MCF 10A (cell line): ENCODE measurements at regions of chr2 and their contacts with region 1.

Region 1: DNA sequence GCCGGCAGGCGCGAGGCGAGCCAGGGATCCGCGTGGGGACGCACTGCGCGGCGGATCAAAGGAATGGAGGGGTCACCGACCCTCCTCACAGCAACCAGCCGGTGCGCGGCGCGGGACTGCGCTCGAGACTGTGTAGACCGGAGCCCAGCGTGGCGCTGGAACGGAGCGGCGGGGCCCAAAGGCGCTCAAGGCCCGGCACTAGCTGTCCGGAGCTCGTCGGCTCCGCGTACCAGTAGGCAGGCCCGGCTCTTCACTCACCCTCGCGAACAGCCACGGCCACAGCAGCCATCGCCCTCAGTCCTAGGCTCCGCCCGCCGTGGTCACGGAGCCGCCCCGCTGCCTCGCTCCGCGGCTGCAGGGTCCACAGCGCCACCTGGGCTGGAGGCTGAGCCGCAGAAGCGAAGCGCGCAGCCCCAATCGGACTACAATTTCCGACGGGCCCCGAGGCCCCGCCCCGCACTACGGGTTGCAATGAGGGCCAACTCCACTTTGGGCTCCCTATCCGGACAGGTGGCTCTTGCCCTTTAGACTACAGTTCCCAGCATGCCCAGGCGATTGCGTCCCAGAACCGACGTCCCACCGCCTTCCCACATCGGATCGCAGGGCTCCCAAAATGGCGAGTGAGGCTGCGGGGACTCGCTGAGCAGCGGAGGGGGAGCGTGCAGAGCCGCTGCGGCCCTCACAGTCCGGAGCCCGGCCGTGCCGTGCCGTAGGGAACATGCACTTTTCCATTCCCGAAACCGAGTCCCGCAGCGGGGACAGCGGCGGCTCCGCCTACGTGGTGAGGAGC is at the starts of genes EIF2B4 and SNX17:
- DNase-seq: peak; percentile 99
- H3K4me3 Mint-ChIP-seq: peak within 1 kb of the TSS; percentile 86
- H3K27ac Mint-ChIP-seq: peak within 1 kb of the TSS; percentile 81
- H3K4me1 Mint-ChIP-seq: peaks cover 21% of the 10 kb centered on the region
- H3K27me3 Mint-ChIP-seq: no peaks in the 10 kb centered on the region
- CTCF ChIP-seq: peak; percentile 69
- total RNA-seq, gene EIF2B4: 42.7 and 50.1 TPM in 2 replicates
- total RNA-seq, gene SNX17: 101 and 125 TPM in 2 replicates

Region 2: GRCh38 chr2:27356382-27357181 is 13.6 kb before region 1 on chr2 and contains the start of gene GTF3C2:
- CTCF ChIA-PET with region 1: interaction called, 21 read pairs
- POLR2A ChIA-PET with region 1: interaction called, 148 read pairs
- intact Hi-C with region 1: loop called (anchors 1 kb)
- DNase-seq: peak; percentile 97
- H3K4me3 Mint-ChIP-seq: peak within 1 kb of the TSS; percentile 90
- H3K27ac Mint-ChIP-seq: peak within 1 kb of the TSS; percentile 93
- H3K4me1 Mint-ChIP-seq: peaks cover 31% of the 10 kb centered on the region
- H3K27me3 Mint-ChIP-seq: no peaks in the 10 kb centered on the region
- CTCF ChIP-seq: no peak
- total RNA-seq, gene GTF3C2: 47.5 and 47.8 TPM in 2 replicates

Region 3: DNA sequence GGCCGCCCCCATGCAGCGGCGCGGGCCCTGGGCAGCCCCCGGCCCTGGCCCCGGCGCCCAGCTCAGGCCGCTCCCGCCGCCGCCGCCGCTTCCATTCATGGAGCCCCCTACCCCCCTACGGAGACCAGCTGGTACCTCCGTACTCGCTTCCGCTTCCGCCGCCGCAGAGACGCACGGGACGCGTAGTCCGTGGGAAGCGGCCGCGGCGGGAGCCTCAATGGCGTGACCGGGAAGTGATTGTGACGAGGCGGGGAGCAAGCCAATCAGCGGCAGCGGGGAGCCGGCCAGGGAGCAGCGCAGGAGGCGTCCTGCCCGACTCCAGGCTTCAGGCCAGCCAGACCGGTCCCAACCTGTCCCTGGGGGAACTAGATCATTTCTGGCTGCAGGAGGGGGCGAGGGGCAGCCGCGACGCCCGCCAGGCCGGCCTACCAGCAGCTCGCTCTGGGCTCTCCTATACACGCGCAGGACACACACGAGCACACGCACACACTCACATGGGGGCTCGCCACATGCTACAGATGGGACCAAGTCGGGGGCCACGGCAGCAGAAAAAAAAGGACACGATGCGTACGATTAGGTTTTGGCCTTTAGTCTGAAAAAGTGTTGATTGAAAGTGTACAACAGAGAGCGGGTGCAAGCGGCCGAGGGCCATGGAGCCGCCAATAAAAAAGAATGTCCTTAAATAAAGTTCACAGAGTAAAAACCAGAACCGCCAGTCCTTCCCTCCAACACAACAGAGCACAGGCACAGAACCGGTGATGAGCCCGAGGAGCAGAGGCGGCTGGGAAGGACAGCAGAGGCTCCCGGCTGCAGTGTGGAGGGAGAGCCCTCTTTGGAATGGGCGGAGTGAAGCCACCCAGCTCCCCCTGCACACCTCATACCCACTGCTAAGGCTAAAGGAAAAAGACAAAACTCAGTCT is 10.7 kb after region 1 on chr2 and contains the start of gene ZNF513:
- CTCF ChIA-PET with region 1: interaction called, 12 read pairs
- POLR2A ChIA-PET with region 1: interaction called, 114 read pairs
- intact Hi-C with region 1: loop called (anchors 1 kb)
- DNase-seq: peak; percentile 95
- H3K4me3 Mint-ChIP-seq: peak within 1 kb of the TSS; percentile 84
- H3K27ac Mint-ChIP-seq: peak within 1 kb of the TSS; percentile 93
- H3K4me1 Mint-ChIP-seq: peaks cover 20% of the 10 kb centered on the region
- H3K27me3 Mint-ChIP-seq: no peaks in the 10 kb centered on the region
- CTCF ChIP-seq: no peak
- total RNA-seq, gene ZNF513: 14.8 and 16.2 TPM in 2 replicates